Activated CD4-positive, alpha-beta T cell treated with anti-CD3 and anti-CD28 coated beads for 36 hours (primary cell): ENCODE measurements at regions of chr16 and their contacts with region 1.

Region 1: DNA sequence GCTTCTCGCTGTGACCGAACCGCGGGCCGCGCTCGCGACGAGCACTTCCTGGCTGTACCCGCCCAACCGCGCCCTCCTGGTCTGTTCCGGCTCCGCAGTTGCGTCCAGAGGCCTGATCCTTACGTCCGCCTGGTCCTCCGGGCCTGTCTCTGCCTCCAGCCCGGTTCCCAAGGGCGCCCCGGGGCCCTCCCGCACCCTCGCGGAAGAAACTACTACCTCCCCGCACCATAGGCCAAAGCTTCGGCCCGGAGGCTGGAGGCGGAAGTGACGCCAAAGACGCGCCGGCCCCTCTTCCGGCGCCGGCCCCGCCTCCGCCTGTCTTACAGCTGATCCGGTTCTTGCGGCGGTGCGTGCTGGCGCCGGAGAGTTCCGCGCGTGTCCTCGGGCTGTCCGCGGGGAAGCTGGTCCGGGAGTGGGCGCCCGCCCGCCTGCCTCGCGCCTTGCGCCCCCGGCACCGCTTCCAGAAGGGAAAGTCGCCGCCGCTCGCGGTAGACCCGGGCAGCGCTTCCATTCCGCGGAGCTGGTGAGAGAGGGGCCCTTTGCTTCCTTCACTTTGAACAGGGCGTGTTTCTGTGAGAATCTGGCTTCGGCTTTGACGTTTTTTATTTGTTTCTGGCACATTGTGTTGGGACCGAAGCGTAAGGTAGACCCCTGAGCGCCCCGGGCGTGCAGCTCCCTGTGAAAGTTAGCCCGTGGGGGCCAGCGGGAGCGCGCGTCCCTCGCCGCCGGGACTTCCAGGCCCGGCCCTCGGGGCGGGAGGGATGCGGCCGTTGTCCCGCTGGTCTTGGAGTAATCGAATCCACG is at the start of gene ZNF778:
- DNase-seq: peak; percentile 89
- ATAC-seq: peak; percentile 81
- H3K4me3 Mint-ChIP-seq: peak within 1 kb of the TSS; percentile 83
- H3K27ac Mint-ChIP-seq: peak within 1 kb of the TSS; percentile 93
- H3K4me1 Mint-ChIP-seq: peaks cover 19% of the 10 kb centered on the region
- H3K27me3 Mint-ChIP-seq: no peaks in the 10 kb centered on the region
- total RNA-seq, gene ZNF778: 4.7 to 5.0 TPM

Region 2: GRCh38 chr16:88737298-88738150 is 480.1 kb before region 1 on chr16:
- CTCF ChIA-PET with region 1: no interaction called
- POLR2A ChIA-PET with region 1: no interaction called
- intact Hi-C with region 1: loop called in 1 of 2 experiments (anchors 2 kb)
- DNase-seq: peak; percentile 89
- ATAC-seq: peak; percentile 91
- H3K4me3 Mint-ChIP-seq: no peak overlapping the region
- H3K27ac Mint-ChIP-seq: no peak overlapping the region
- H3K4me1 Mint-ChIP-seq: no peaks in the 10 kb centered on the region
- H3K27me3 Mint-ChIP-seq: no peaks in the 10 kb centered on the region

Region 3: GRCh38 chr16:89099905-89100304 is 117.7 kb before region 1 on chr16:
- CTCF ChIA-PET with region 1: no interaction called
- POLR2A ChIA-PET with region 1: no interaction called
- intact Hi-C with region 1: loop called in 1 of 2 experiments (anchors 1 kb)
- DNase-seq: peak; percentile 63
- ATAC-seq: no peak
- H3K4me3 Mint-ChIP-seq: peak overlapping the region; percentile 36
- H3K27ac Mint-ChIP-seq: peak overlapping the region; percentile 85
- H3K4me1 Mint-ChIP-seq: peaks cover 76% of the 10 kb centered on the region
- H3K27me3 Mint-ChIP-seq: no peaks in the 10 kb centered on the region

Region 4: GRCh38 chr16:89193021-89193575 is 24.5 kb before region 1 on chr16:
- CTCF ChIA-PET with region 1: no interaction called
- POLR2A ChIA-PET with region 1: no interaction called
- intact Hi-C with region 1: loop called in 1 of 2 experiments (anchors 2 kb)
- DNase-seq: no peak
- ATAC-seq: peak; percentile 78
- H3K4me3 Mint-ChIP-seq: no peak overlapping the region
- H3K27ac Mint-ChIP-seq: no peak overlapping the region
- H3K4me1 Mint-ChIP-seq: no peaks in the 10 kb centered on the region
- H3K27me3 Mint-ChIP-seq: no peaks in the 10 kb centered on the region

Region 5: DNA sequence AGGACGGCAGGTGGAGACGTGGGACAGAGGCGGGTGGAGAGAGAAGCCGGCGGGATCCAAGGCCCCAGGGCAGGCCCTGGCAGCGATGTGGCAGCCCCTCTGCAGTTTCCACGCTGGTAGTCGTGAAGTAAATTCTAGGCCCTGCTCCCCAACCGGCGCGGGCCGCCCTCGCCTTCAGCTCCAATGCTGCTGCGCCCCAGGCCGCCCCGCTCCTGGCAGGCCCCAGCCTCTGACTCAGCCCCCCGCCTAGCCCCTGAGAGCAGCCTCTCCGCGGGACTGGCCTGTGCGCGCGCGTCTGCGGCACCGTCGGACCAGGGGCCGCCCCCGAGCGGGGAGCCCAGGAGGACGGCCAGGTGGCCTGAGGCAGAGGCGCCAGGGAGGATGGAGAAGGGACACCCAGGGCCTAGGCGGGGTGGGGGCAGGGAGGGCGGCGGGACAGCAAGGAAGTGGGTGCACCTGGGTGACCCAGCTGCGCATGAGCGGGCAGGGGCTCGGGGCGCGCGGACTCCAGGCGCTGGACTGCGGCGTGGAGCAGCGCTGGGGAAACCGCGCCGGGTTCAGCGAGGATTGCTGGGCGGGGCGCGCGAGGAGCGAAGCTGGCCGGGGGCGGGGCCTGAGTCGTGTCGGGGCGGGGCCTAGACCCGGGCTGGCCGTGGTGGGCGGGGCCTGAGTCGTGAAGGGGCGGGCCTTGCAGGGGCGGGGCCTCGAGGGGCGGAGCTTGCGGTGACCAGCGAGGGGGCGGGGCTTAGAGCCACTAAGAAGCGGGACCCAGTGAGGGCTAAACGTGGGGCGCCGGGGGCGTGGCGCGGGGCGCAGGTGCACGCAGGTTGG is 29.5 kb after region 1 on chr16:
- CTCF ChIA-PET with region 1: interaction called, 9 read pairs
- POLR2A ChIA-PET with region 1: interaction called, 6 read pairs
- intact Hi-C with region 1: loop called in 1 of 2 experiments (anchors 1 kb)
- DNase-seq: peak; percentile 99
- ATAC-seq: peak; percentile 93
- H3K4me3 Mint-ChIP-seq: peak overlapping the region; percentile 71
- H3K27ac Mint-ChIP-seq: no peak overlapping the region
- H3K4me1 Mint-ChIP-seq: peaks cover 15% of the 10 kb centered on the region
- H3K27me3 Mint-ChIP-seq: no peaks in the 10 kb centered on the region

Region 6: GRCh38 chr16:89268987-89269735 is 51.6 kb after region 1 on chr16:
- CTCF ChIA-PET with region 1: no interaction called
- POLR2A ChIA-PET with region 1: no interaction called
- intact Hi-C with region 1: no loop called
- DNase-seq: no peak
- ATAC-seq: no peak
- H3K4me3 Mint-ChIP-seq: no peak overlapping the region
- H3K27ac Mint-ChIP-seq: peak overlapping the region; percentile 19
- H3K4me1 Mint-ChIP-seq: no peaks in the 10 kb centered on the region
- H3K27me3 Mint-ChIP-seq: no peaks in the 10 kb centered on the region

Region 7: GRCh38 chr16:89289428-89290395 is 72.1 kb after region 1 on chr16:
- CTCF ChIA-PET with region 1: no interaction called
- POLR2A ChIA-PET with region 1: no interaction called
- intact Hi-C with region 1: no loop called
- DNase-seq: peak; percentile 86
- ATAC-seq: peak; percentile 97
- H3K4me3 Mint-ChIP-seq: no peak overlapping the region
- H3K27ac Mint-ChIP-seq: no peak overlapping the region
- H3K4me1 Mint-ChIP-seq: peaks cover 3% of the 10 kb centered on the region
- H3K27me3 Mint-ChIP-seq: no peaks in the 10 kb centered on the region